ENCODE measurements at regions of chr17 and their contacts with region 1.

Region 1: DNA sequence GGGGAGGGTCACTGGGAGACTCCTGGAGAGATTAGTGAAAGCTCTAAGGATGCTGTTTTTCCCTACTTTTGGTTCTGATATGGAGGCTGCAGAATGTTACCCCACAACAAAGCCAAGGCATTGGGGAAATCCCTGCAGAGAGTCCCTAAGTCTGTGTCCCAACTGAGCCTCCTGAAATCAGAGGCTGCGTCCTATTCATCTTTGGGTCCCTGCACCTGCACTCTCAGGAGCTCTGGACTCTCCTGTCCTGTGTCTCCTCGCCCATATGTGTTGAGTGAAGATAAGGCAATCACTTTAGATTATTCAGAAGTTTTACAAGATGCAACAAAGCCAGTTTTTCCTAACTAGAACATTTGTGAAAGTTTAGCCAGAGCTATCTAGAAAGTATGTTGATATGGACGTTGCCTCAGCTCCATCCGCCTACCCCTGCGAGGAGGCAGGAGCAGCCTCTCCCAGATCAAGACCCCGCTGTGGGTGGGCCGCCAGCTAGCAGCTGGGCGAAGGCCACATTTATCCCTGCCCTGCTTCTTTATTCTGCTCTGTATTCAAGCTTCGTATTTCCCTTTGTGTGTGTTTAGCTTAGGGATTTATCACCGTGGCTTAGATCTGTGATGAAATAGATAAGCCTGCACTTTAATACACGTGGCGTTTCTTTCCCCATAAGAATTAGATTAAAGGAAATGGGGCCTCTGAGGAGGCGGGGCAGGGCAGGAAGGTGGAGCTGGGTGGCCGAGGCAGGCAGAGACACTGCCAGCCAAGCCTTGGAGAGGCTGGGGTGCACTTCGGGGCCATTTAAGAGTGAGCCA is 37.4 kb downstream of the SHISA6 start:
- DNase-seq: no peak
- ATAC-seq: no peak
- H3K4me3 ChIP-seq: no peak overlapping the region
- H3K27ac ChIP-seq: no peak overlapping the region
- H3K4me1 ChIP-seq: no peaks in the 10 kb centered on the region
- H3K27me3 ChIP-seq: no peaks in the 10 kb centered on the region
- CTCF ChIP-seq: no peak
- POLR2A ChIP-seq: no peak

Region 2: GRCh38 chr17:11330826-11331225 is 52.4 kb after region 1 on chr17:
- intact Hi-C with region 1: loop called in 1 of 10 experiments (anchors 10 kb)
- DNase-seq: peak in 3 of 5 donors; percentile 16 to 47 (median 30)
- ATAC-seq: peak in 1 of 4 donors; percentile 38
- H3K4me3 ChIP-seq: no peak overlapping the region
- H3K27ac ChIP-seq: no peak overlapping the region
- H3K4me1 ChIP-seq: no peaks in the 10 kb centered on the region
- H3K27me3 ChIP-seq: peaks cover 0 to 27% (median 0%) of the 10 kb centered on the region in 9 donors
- CTCF ChIP-seq: no peak
- POLR2A ChIP-seq: no peak

Measured in heart left ventricle (tissue), 16 donors.